CD8-positive, alpha-beta T cell (primary cell): ENCODE measurements at regions of chr13 and their contacts with region 1.

Region 1: DNA sequence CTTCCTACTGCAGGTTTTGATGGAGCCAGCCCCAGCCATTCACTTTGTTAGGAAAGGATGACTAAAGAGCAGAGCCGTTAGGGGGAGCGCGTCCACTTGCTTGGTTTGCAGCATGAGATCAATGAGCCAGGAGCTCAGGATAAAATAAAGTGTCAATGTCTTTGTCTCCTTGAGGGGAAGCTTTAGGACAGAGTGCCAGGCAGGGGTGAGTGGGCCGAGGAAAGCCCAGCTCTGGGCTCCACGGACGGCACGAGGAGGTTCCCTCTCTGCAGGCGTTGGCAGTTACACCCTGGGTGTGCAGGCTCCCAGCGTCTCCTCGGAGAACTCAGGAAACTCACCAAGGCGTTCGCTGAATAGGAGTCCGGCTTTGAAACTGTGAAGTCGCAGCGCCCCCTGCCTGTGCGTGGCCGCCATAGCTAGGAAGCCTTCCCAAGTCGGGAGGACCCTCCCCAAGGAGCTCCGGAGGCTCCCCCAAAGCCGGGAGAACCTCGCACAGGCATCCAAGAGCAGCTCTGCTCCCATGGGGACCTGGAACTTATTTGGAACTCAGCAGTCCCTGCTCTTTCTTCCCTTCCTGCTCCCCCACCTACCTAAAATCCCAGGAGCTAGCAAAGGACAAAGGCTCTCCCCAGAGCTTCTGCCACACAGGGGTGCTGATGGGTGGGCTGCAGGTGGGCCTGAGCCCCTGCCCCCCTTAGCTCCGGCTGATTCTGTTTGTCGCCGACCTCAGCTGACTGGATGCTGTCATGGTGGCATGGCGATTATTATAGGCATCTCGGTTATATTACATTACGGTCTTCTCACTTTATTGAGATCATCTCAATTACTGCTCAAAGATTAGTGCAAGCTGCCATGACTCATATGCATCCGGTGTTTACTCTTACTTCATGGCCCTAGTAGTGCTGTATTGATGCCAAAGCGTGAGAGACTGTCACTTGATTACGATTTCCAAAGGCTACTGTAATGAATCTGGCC is 34.4 kb downstream of the GSX1 start:
- DNase-seq: peak; percentile 26 to 80 (median 69)
- ATAC-seq: peak; percentile 62
- H3K4me3 ChIP-seq: no peak overlapping the region
- H3K4me3 Mint-ChIP-seq: no peak overlapping the region
- H3K27ac ChIP-seq: no peak overlapping the region
- H3K27ac Mint-ChIP-seq: no peak overlapping the region
- H3K4me1 ChIP-seq: no peaks in the 10 kb centered on the region
- H3K4me1 Mint-ChIP-seq: peaks cover 10% of the 10 kb centered on the region
- H3K27me3 ChIP-seq: peaks cover 0 to 3% of the 10 kb centered on the region in 2 experiments
- H3K27me3 Mint-ChIP-seq: peaks cover 57% of the 10 kb centered on the region
- CTCF ChIP-seq: peak; percentile 78

Region 2: DNA sequence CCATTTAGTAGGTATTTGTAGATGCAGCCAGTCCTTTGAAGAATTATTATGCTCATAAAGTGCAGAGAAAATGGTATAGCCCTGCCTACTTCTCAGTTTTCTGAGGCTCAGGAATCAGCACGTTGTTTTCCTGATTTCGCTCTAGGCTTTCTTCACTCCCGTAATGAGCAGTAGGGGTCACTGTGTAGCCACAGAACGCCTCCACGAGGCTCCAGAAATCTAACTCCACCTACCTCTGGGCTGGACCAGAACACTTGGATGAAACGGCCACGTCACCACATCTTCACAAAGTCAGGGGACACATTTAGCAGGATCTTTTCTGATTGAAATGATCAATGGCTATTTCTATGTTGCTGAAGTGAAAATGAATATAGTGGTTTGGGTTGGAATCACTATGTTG is 452.0 kb before region 1 on chr13:
- CTCF ChIA-PET with region 1: interaction called, 235 read pairs
- POLR2A ChIA-PET with region 1: no interaction called
- intact Hi-C with region 1: loop called in 1 of 2 experiments (anchors 1 kb)
- DNase-seq: peak; percentile 14 to 75 (median 51)
- ATAC-seq: peak; percentile 85
- H3K4me3 ChIP-seq: no peak overlapping the region
- H3K4me3 Mint-ChIP-seq: no peak overlapping the region
- H3K27ac ChIP-seq: no peak overlapping the region
- H3K27ac Mint-ChIP-seq: no peak overlapping the region
- H3K4me1 ChIP-seq: no peaks in the 10 kb centered on the region
- H3K4me1 Mint-ChIP-seq: peaks cover 5% of the 10 kb centered on the region
- H3K27me3 ChIP-seq: no peaks in the 10 kb centered on the region
- H3K27me3 Mint-ChIP-seq: peaks cover 28% of the 10 kb centered on the region
- CTCF ChIP-seq: peak; percentile 67

Region 3: GRCh38 chr13:27533155-27533643 is 293.5 kb before region 1 on chr13:
- CTCF ChIA-PET with region 1: interaction called, 20 read pairs
- POLR2A ChIA-PET with region 1: no interaction called
- intact Hi-C with region 1: loop called (anchors 1 to 2 kb)
- DNase-seq: peak; percentile 12 to 67 (median 52)
- ATAC-seq: peak; percentile 78
- H3K4me3 ChIP-seq: peak overlapping the region in 1 of 2 experiments; percentile 28
- H3K4me3 Mint-ChIP-seq: no peak overlapping the region
- H3K27ac ChIP-seq: no peak overlapping the region
- H3K27ac Mint-ChIP-seq: no peak overlapping the region
- H3K4me1 ChIP-seq: peaks cover 10% of the 10 kb centered on the region
- H3K4me1 Mint-ChIP-seq: peaks cover 7% of the 10 kb centered on the region
- H3K27me3 ChIP-seq: no peaks in the 10 kb centered on the region
- H3K27me3 Mint-ChIP-seq: peaks cover 3% of the 10 kb centered on the region
- CTCF ChIP-seq: peak; percentile 74

Region 4: GRCh38 chr13:27644302-27644701 is 182.4 kb before region 1 on chr13:
- CTCF ChIA-PET with region 1: no interaction called
- POLR2A ChIA-PET with region 1: no interaction called
- intact Hi-C with region 1: no loop called
- DNase-seq: no peak
- ATAC-seq: no peak
- H3K4me3 ChIP-seq: no peak overlapping the region
- H3K4me3 Mint-ChIP-seq: no peak overlapping the region
- H3K27ac ChIP-seq: no peak overlapping the region
- H3K27ac Mint-ChIP-seq: no peak overlapping the region
- H3K4me1 ChIP-seq: no peaks in the 10 kb centered on the region
- H3K4me1 Mint-ChIP-seq: peaks cover 32% of the 10 kb centered on the region
- H3K27me3 ChIP-seq: no peaks in the 10 kb centered on the region
- H3K27me3 Mint-ChIP-seq: no peaks in the 10 kb centered on the region
- CTCF ChIP-seq: no peak

Region 5: GRCh38 chr13:27783111-27783510 is 43.6 kb before region 1 on chr13:
- CTCF ChIA-PET with region 1: interaction called, 10 read pairs
- POLR2A ChIA-PET with region 1: no interaction called
- intact Hi-C with region 1: no loop called
- DNase-seq: no peak
- ATAC-seq: no peak
- H3K4me3 ChIP-seq: no peak overlapping the region
- H3K4me3 Mint-ChIP-seq: no peak overlapping the region
- H3K27ac ChIP-seq: no peak overlapping the region
- H3K27ac Mint-ChIP-seq: no peak overlapping the region
- H3K4me1 ChIP-seq: no peaks in the 10 kb centered on the region
- H3K4me1 Mint-ChIP-seq: no peaks in the 10 kb centered on the region
- H3K27me3 ChIP-seq: peaks cover 0 to 2% of the 10 kb centered on the region in 2 experiments
- H3K27me3 Mint-ChIP-seq: peaks cover 28% of the 10 kb centered on the region
- CTCF ChIP-seq: no peak

Region 6: DNA sequence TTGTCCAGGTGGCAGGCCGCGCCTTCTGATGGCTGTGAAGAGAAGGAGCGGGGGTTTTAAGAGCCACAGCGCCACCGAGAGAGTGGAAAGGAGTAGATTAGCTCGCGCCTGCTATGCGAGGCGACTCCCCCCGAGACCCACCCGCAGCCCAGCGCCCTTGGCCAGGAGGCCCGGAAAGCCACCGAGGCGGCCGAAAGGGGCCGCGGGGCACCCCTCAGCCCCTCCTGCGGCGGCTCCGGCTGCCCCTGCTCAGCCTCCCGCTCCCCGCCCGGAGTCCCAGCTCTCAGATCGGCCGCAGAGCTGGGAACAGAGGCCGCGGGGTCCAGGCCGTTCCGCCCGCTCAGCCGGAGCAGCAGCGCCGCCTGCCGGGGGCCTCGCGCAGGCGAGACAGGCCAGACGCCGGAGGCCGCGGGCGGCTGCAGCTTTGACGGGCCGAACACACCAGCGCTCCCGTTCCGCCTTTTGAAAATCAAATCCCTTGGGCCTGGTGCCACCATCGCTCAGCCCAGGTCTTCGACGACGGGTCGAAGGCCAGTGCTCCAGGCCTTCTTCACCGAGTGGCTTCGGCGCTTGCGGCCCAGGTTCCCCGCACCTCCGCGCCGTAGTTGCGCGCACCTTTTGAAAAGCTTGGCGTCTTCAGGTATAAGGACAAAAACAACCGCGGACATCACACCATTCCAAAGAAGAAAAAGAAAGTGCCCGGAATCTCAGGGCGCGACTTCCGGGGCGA is 127.2 kb after region 1 on chr13:
- CTCF ChIA-PET with region 1: interaction called, 14 read pairs
- POLR2A ChIA-PET with region 1: no interaction called
- intact Hi-C with region 1: loop called (anchors 2 kb)
- DNase-seq: peak; percentile 23 to 73 (median 54)
- ATAC-seq: peak; percentile 81
- H3K4me3 ChIP-seq: peak overlapping the region; percentile 28 to 53
- H3K4me3 Mint-ChIP-seq: peak overlapping the region; percentile 71
- H3K27ac ChIP-seq: no peak overlapping the region
- H3K27ac Mint-ChIP-seq: no peak overlapping the region
- H3K4me1 ChIP-seq: peaks cover 7% of the 10 kb centered on the region
- H3K4me1 Mint-ChIP-seq: peaks cover 17% of the 10 kb centered on the region
- H3K27me3 ChIP-seq: peaks cover 18 to 22% of the 10 kb centered on the region in 2 experiments
- H3K27me3 Mint-ChIP-seq: peaks cover 68% of the 10 kb centered on the region
- CTCF ChIP-seq: peak; percentile 70